ENCODE measurements at regions of chr1 and their contacts with region 1.

Region 1: GRCh38 chr1:159924981-159925712 is at the start of gene TAGLN2:
- DNase-seq: peak; percentile 90
- H3K4me3 Mint-ChIP-seq: peak within 1 kb of the TSS; percentile 89
- H3K27ac Mint-ChIP-seq: peak within 1 kb of the TSS; percentile 95
- H3K4me1 Mint-ChIP-seq: peaks cover 42% of the 10 kb centered on the region
- H3K27me3 Mint-ChIP-seq: no peaks in the 10 kb centered on the region
- total RNA-seq, gene TAGLN2: 429 to 461 TPM

Region 2: DNA sequence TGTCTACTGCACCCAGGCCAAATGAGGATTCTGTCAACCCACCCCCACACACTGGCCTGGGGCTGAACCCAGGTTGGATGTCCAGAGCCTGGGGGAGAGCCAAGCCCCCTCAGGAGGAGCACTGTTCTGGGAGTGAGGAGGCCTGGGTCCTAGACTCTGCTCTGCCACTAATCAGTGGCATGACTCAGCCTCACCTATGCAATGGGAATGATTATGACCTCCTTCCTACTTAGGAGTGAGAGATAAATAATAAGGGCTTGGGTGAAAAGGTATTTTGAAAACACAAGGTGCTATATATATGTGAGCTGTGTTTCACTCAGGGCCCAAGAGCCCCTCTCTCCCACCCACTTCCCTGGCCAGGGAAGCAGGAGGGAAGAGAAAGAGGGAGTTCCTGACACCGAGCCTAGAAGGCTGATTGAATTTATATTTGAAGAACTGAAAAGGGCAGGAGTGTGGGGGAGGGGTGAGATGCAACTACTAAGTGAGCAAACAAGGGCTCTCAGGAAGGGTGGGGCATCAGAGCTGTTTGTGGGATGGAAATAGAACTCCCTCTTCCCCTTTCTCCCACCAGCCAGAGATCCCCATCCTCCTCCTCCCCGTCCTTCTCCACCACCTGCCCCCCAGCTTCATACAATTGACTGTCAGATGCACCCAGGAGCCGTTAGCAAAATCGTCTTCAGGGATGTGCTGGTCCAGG is 12.1 kb after region 1 on chr1:
- CTCF ChIA-PET with region 1: interaction called, 13 read pairs
- POLR2A ChIA-PET with region 1: no interaction called
- DNase-seq: no peak
- H3K4me3 Mint-ChIP-seq: no peak overlapping the region
- H3K27ac Mint-ChIP-seq: no peak overlapping the region
- H3K4me1 Mint-ChIP-seq: peaks cover 24% of the 10 kb centered on the region
- H3K27me3 Mint-ChIP-seq: peaks cover 17% of the 10 kb centered on the region